Right ventricle myocardium inferior (tissue), 1 donor: ENCODE measurements at regions of chr7 and their contacts with region 1.

Region 1: GRCh38 chr7:774161-775109 is 47.4 kb upstream of the PRKAR1B start:
- DNase-seq: no peak
- ATAC-seq: peak; percentile 56

Region 2: DNA sequence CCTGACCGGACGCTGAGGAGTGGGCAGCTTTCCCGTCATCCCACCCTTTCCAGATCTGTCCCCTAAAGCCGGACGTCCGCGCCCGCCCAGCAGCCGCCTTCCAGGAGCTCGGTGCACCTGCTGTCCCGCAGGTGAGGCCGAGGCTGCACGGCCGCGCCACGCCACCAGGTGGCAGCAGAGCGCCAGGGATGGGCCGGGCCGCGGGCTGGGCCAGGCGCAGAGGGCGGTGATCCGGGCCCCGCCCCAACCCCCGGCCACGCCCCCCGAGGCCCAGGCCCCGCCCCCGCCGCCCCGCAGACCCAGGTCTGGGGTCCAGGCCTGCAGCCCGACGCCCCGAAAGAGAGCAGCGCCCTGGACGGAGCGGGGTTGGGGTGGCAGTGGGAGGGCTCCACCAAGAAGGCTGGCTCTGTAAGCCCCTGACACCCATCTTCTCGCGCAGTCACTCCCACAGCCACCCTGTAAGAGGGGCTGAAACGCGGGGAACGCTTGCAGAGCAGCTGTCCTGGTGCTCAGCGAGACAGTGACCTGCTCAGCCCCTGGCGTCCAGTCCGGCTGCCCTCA is 452.2 kb before region 1 on chr7:
- intact Hi-C with region 1: loop called (anchors 2 kb)
- DNase-seq: peak; percentile 85
- ATAC-seq: peak; percentile 85

Region 3: GRCh38 chr7:332646-333392 is 441.6 kb before region 1 on chr7:
- intact Hi-C with region 1: loop called (anchors 2 kb)
- DNase-seq: peak; percentile 90
- ATAC-seq: peak; percentile 92

Region 4: GRCh38 chr7:746155-747061 is 28.0 kb before region 1 on chr7:
- intact Hi-C with region 1: no loop called
- DNase-seq: peak; percentile 68
- ATAC-seq: no peak